ENCODE measurements at regions of chr1 and their contacts with region 1.

Region 1: GRCh38 chr1:65812065-65812464 is 19.4 kb downstream of the PDE4B start:
- DNase-seq: peak; percentile 77
- H3K4me3 Mint-ChIP-seq: peak overlapping the region; percentile 6
- H3K27ac Mint-ChIP-seq: peak overlapping the region; percentile 68
- H3K4me1 Mint-ChIP-seq: peaks cover 43% of the 10 kb centered on the region
- H3K27me3 Mint-ChIP-seq: peaks cover 13% of the 10 kb centered on the region

Region 2: DNA sequence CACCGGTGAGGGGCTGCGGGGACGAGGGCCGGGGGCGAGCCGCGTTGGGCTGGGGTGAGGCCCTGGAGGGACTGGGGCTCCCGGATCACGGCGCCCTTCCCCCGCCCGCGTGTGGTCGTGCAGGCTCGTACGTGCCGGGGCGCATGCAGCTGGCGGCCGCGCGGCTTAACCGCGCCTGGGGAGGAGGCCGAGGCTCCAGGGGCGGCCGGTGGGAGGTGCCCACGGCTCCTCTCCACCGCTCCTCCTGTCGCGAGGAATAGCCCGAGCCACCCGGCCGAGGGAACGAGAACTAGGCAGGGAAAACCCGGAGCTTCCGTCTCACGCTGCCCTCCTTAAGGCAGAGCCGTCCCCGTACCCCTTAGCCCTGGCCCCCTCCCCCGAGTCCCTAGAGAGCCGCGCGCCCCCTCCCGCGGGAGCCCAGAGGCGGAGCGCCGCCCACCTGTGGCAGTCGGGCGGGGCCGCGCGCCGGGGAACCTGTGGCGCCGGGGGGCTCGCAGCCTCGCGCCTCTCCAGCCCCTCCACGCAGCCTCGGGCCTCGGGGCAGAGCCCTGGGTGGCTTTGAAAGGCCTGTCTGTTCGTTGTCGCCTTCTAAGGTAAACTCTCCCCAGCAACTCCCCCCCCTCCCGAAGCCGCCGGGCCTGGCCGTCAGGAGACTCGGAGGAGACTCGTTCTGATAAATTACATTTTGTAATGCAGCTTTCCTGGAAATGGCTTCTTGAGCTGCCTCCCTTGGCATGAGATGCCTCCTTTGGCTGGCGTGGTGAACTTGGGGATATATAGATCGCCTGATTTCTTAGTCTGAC is 663.3 kb before region 1 on chr1:
- intact Hi-C with region 1: loop called (anchors 5 kb)
- DNase-seq: peak; percentile 55
- H3K4me3 Mint-ChIP-seq: peak overlapping the region; percentile 94
- H3K27ac Mint-ChIP-seq: peak overlapping the region; percentile 90
- H3K4me1 Mint-ChIP-seq: peaks cover 52% of the 10 kb centered on the region
- H3K27me3 Mint-ChIP-seq: peaks cover 7% of the 10 kb centered on the region

Region 3: GRCh38 chr1:65419681-65420589 is 392.1 kb before region 1 on chr1:
- intact Hi-C with region 1: loop called (anchors 2 kb)
- DNase-seq: peak; percentile 98
- H3K4me3 Mint-ChIP-seq: no peak overlapping the region
- H3K27ac Mint-ChIP-seq: peak overlapping the region; percentile 90
- H3K4me1 Mint-ChIP-seq: peaks cover 32% of the 10 kb centered on the region
- H3K27me3 Mint-ChIP-seq: peaks cover 5% of the 10 kb centered on the region

Region 4: GRCh38 chr1:65958561-65959350 is 146.7 kb after region 1 on chr1:
- intact Hi-C with region 1: loop called (anchors 5 kb)
- DNase-seq: peak; percentile 10
- H3K4me3 Mint-ChIP-seq: no peak overlapping the region
- H3K27ac Mint-ChIP-seq: no peak overlapping the region
- H3K4me1 Mint-ChIP-seq: peaks cover 14% of the 10 kb centered on the region
- H3K27me3 Mint-ChIP-seq: peaks cover 2% of the 10 kb centered on the region

Region 5: GRCh38 chr1:66300972-66301451 is 488.9 kb after region 1 on chr1:
- intact Hi-C with region 1: loop called (anchors 1 kb)
- DNase-seq: peak; percentile 48
- H3K4me3 Mint-ChIP-seq: peak overlapping the region; percentile 80
- H3K27ac Mint-ChIP-seq: peak overlapping the region; percentile 94
- H3K4me1 Mint-ChIP-seq: peaks cover 47% of the 10 kb centered on the region
- H3K27me3 Mint-ChIP-seq: no peaks in the 10 kb centered on the region

Region 6: GRCh38 chr1:66436378-66437145 is 624.5 kb after region 1 on chr1:
- intact Hi-C with region 1: loop called (anchors 1 kb)
- DNase-seq: peak; percentile 34
- H3K4me3 Mint-ChIP-seq: no peak overlapping the region
- H3K27ac Mint-ChIP-seq: peak overlapping the region; percentile 2
- H3K4me1 Mint-ChIP-seq: peaks cover 45% of the 10 kb centered on the region
- H3K27me3 Mint-ChIP-seq: no peaks in the 10 kb centered on the region

Region 7: DNA sequence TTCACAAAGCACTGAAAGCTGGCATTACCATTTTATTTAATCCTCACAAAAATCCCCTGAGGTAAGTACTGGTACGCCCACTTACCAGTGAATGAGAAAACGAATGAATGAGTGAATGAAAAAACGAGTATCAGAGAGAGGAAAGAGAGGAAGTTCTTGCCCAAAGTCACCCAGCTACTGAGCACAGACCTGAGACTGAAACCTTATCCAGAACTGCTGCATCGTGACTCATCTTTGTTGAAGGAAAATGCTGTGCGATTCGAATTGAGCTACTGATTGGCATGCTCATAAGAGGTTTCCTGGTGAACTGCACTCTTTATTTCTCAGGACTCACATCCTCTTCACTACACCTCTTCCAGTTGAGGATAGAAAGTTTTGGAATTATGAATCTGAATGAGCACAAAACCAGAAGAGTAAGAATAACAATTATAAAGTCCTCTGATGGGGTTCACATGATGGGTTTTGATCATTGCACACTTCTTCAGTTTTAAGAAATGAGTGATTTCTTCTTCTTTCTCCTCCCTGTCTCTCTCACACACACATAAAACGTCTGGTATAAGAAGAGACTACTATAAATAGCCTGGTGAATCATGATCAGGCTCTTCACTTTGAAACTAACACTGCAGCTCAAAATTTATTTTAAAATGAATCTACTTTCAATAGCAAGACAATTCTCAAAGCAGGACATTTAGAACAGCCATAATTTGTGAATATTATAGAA is 1527.7 kb after region 1 on chr1:
- intact Hi-C with region 1: loop called (anchors 10 kb)
- DNase-seq: peak; percentile 47
- H3K4me3 Mint-ChIP-seq: peak overlapping the region; percentile 66
- H3K27ac Mint-ChIP-seq: peak overlapping the region; percentile 90
- H3K4me1 Mint-ChIP-seq: peaks cover 80% of the 10 kb centered on the region
- H3K27me3 Mint-ChIP-seq: no peaks in the 10 kb centered on the region